Sigmoid colon (tissue), 7 donors: ENCODE measurements at regions of chr3 and their contacts with region 1.

Region 1: GRCh38 chr3:157572559-157573270 is 69.5 kb upstream of the VEPH1 start:
- DNase-seq: no peak
- H3K4me3 ChIP-seq: no peak overlapping the region
- H3K27ac ChIP-seq: no peak overlapping the region
- H3K4me1 ChIP-seq: no peaks in the 10 kb centered on the region
- H3K27me3 ChIP-seq: no peaks in the 10 kb centered on the region
- CTCF ChIP-seq: peak; percentile 34 to 77 (median 51)
- EP300 ChIP-seq: no peak
- POLR2A ChIP-seq: no peak

Region 2: GRCh38 chr3:157029365-157029790 is 543.3 kb before region 1 on chr3:
- intact Hi-C with region 1: no loop called
- DNase-seq: no peak
- H3K4me3 ChIP-seq: no peak overlapping the region
- H3K27ac ChIP-seq: no peak overlapping the region
- H3K4me1 ChIP-seq: no peaks in the 10 kb centered on the region
- H3K27me3 ChIP-seq: no peaks in the 10 kb centered on the region
- CTCF ChIP-seq: no peak
- EP300 ChIP-seq: no peak
- POLR2A ChIP-seq: no peak

Region 3: GRCh38 chr3:157532529-157533297 is 40.0 kb before region 1 on chr3:
- intact Hi-C with region 1: loop called (anchors 1 kb)
- DNase-seq: no peak
- H3K4me3 ChIP-seq: no peak overlapping the region
- H3K27ac ChIP-seq: no peak overlapping the region
- H3K4me1 ChIP-seq: no peaks in the 10 kb centered on the region
- H3K27me3 ChIP-seq: no peaks in the 10 kb centered on the region
- CTCF ChIP-seq: peak; percentile 41 to 73 (median 68)
- EP300 ChIP-seq: no peak
- POLR2A ChIP-seq: no peak